Spleen (tissue), 13 donors: ENCODE measurements at regions of chr10 and their contacts with region 1.

Region 1: GRCh38 chr10:21495752-21496342 is 29.6 kb downstream of the SKIDA1 start:
- DNase-seq: peak; percentile 97
- H3K4me3 ChIP-seq: peak overlapping the region; percentile 65 to 89 (median 74)
- H3K27ac ChIP-seq: peak overlapping the region in 5 of 8 donors; percentile 13 to 52 (median 16)
- H3K4me1 ChIP-seq: peaks cover 23 to 59% (median 51%) of the 10 kb centered on the region in 6 donors
- H3K27me3 ChIP-seq: peaks cover 0 to 74% (median 48%) of the 10 kb centered on the region in 7 donors
- CTCF ChIP-seq: peak; percentile 86 to 100 (median 99)
- POLR2A ChIP-seq: no peak

Region 2: GRCh38 chr10:21427804-21428481 is 67.9 kb before region 1 on chr10:
- intact Hi-C with region 1: no loop called
- DNase-seq: no peak
- H3K4me3 ChIP-seq: no peak overlapping the region
- H3K27ac ChIP-seq: no peak overlapping the region
- H3K4me1 ChIP-seq: no peaks in the 10 kb centered on the region
- H3K27me3 ChIP-seq: no peaks in the 10 kb centered on the region
- CTCF ChIP-seq: no peak
- POLR2A ChIP-seq: no peak

Region 3: GRCh38 chr10:21732067-21732772 is 236.4 kb after region 1 on chr10:
- intact Hi-C with region 1: loop called (anchors 5 kb)
- DNase-seq: peak; percentile 82
- H3K4me3 ChIP-seq: no peak overlapping the region
- H3K27ac ChIP-seq: no peak overlapping the region
- H3K4me1 ChIP-seq: peaks cover 0 to 23% (median 0%) of the 10 kb centered on the region in 6 donors
- H3K27me3 ChIP-seq: no peaks in the 10 kb centered on the region
- CTCF ChIP-seq: peak; percentile 20 to 83 (median 69)
- POLR2A ChIP-seq: no peak

Region 4: GRCh38 chr10:21953585-21954057 is 457.8 kb after region 1 on chr10:
- intact Hi-C with region 1: loop called (anchors 10 kb)
- DNase-seq: no peak
- H3K4me3 ChIP-seq: no peak overlapping the region
- H3K27ac ChIP-seq: no peak overlapping the region
- H3K4me1 ChIP-seq: peaks cover 0 to 21% (median 11%) of the 10 kb centered on the region in 6 donors
- H3K27me3 ChIP-seq: no peaks in the 10 kb centered on the region
- CTCF ChIP-seq: peak in 2 of 11 experiments; percentile 20
- POLR2A ChIP-seq: no peak